ENCODE measurements at regions of chr2 and their contacts with region 1.

Region 1: GRCh38 chr2:72150157-72150865 is 2.6 kb upstream of the CYP26B1 start:
- DNase-seq: peak in 1 of 2 donors; percentile 86
- H3K4me3 ChIP-seq: peak overlapping the region; percentile 52 to 72
- H3K27ac ChIP-seq: no peak overlapping the region
- H3K4me1 ChIP-seq: peaks cover 11 to 31% of the 10 kb centered on the region in 2 donors
- H3K27me3 ChIP-seq: no peaks in the 10 kb centered on the region
- CTCF ChIP-seq: peak; percentile 88 to 90 (median 88)

Region 2: GRCh38 chr2:70301344-70302194 is 1848.7 kb before region 1 on chr2 and contains the start of gene FAM136A:
- intact Hi-C with region 1: loop called (anchors 5 kb)
- DNase-seq: peak; percentile 16 to 90
- H3K4me3 ChIP-seq: peak within 1 kb of the TSS; percentile 66 to 84
- H3K27ac ChIP-seq: peak within 1 kb of the TSS; percentile 80
- H3K4me1 ChIP-seq: peaks cover 0 to 5% of the 10 kb centered on the region in 2 donors
- H3K27me3 ChIP-seq: no peaks in the 10 kb centered on the region
- CTCF ChIP-seq: peak; percentile 94 to 99 (median 97)
- total RNA-seq, gene FAM136A: 2.0 TPM

Region 3: DNA sequence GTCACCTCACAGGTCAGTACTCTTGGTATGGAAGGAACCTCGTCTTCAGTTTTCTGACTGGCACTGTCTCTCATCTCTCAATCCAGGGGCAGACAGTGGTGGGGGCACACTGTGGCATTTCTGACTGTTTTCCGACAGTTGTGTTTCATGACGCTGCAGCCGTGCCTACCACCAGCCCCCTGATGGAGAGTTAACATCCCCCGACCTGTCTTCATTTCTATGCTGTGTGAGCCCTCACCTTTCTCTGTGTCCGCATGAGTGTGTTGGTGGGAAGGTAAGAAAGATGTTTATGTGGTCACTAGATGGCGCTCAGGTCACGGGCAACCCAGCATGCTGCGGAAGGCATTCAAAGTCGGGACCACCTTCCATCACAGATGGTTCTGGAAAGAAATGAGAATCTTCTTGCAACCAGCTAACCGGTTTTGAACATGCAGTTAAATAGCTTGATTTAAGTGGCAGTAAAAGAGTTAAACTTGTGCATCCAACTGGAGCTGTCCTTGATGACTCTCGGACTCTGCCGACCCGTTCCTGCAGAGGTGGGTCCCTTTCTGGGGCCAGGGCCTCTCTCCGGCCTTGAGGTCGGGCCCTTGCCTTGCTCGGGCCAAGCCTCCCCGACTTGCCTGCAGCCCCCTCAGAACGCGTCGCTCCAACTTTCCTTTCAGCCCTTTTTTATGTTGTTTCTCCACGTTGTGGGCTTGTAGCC is 604.6 kb before region 1 on chr2:
- intact Hi-C with region 1: loop called (anchors 1 kb)
- DNase-seq: peak in 1 of 2 donors; percentile 76
- H3K4me3 ChIP-seq: no peak overlapping the region
- H3K27ac ChIP-seq: no peak overlapping the region
- H3K4me1 ChIP-seq: no peaks in the 10 kb centered on the region
- H3K27me3 ChIP-seq: no peaks in the 10 kb centered on the region
- CTCF ChIP-seq: peak; percentile 74 to 84 (median 75)

Region 4: DNA sequence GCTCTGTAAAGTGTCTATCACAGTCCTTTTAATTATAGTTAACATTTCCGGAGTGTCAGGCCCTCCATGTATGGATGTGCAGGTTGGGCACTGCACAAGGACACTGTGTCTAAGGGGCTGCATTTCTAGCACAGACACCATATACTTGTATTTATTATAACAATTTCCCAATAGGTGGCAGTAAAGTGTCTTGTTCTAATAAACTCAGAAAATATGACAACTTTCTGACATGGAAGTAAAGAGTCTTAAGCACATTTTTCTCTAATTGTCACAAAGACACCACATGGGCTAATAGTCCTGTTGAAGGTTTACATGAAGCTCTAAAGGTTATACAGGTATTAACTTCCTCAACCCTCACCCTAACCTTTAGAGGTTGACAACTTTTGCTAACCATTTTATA is 540.4 kb before region 1 on chr2:
- intact Hi-C with region 1: loop called (anchors 1 kb)
- DNase-seq: no peak
- H3K4me3 ChIP-seq: no peak overlapping the region
- H3K27ac ChIP-seq: no peak overlapping the region
- H3K4me1 ChIP-seq: peaks cover 0 to 12% of the 10 kb centered on the region in 2 donors
- H3K27me3 ChIP-seq: no peaks in the 10 kb centered on the region
- CTCF ChIP-seq: peak in 2 of 3 experiments; percentile 32 to 53

Region 5: GRCh38 chr2:71798266-71799012 is 351.9 kb before region 1 on chr2:
- intact Hi-C with region 1: loop called (anchors 1 kb)
- DNase-seq: peak in 1 of 2 donors; percentile 63
- H3K4me3 ChIP-seq: no peak overlapping the region
- H3K27ac ChIP-seq: no peak overlapping the region
- H3K4me1 ChIP-seq: peaks cover 7 to 13% of the 10 kb centered on the region in 2 donors
- H3K27me3 ChIP-seq: no peaks in the 10 kb centered on the region
- CTCF ChIP-seq: peak; percentile 69 to 78 (median 72)

Region 6: GRCh38 chr2:71923887-71924533 is 226.3 kb before region 1 on chr2:
- intact Hi-C with region 1: loop called (anchors 1 kb)
- DNase-seq: no peak
- H3K4me3 ChIP-seq: no peak overlapping the region
- H3K27ac ChIP-seq: no peak overlapping the region
- H3K4me1 ChIP-seq: no peaks in the 10 kb centered on the region
- H3K27me3 ChIP-seq: no peaks in the 10 kb centered on the region
- CTCF ChIP-seq: peak; percentile 58 to 85 (median 78)

Region 7: DNA sequence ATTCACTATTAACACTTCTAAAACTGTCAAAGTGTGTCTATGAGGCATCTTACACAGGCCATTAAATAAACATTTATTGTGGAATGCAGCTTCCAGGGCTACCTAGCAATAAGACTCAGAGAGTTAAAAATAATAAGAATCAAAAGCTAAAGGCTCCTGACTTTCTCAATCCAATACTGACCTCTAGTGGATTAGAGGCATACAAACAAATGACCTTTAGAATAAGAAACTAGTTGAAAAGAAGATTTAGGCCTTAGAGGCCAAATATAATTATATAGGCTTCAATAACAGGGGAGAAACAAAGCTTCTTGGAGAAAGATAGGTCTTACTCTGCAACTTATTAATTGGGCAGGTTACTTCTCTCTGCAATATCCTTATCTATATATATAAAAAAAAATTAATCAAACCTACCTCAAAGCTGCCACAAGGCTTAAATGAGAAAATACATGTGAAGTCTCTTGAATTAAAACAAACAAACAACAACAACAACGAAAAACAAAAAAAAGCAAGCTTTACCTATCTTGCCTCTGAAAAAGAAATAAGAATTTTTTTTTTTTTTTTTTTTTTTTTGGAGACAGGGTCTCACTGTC is 429.4 kb after region 1 on chr2:
- intact Hi-C with region 1: loop called (anchors 10 kb)
- DNase-seq: no peak
- H3K4me3 ChIP-seq: no peak overlapping the region
- H3K27ac ChIP-seq: no peak overlapping the region
- H3K4me1 ChIP-seq: no peaks in the 10 kb centered on the region
- H3K27me3 ChIP-seq: no peaks in the 10 kb centered on the region
- CTCF ChIP-seq: peak; percentile 43 to 69 (median 54)

Region 8: GRCh38 chr2:72940786-72941185 is 790.5 kb after region 1 on chr2:
- intact Hi-C with region 1: no loop called
- DNase-seq: no peak
- H3K4me3 ChIP-seq: no peak overlapping the region
- H3K27ac ChIP-seq: no peak overlapping the region
- H3K4me1 ChIP-seq: no peaks in the 10 kb centered on the region
- H3K27me3 ChIP-seq: no peaks in the 10 kb centered on the region
- CTCF ChIP-seq: no peak

Measured in ascending aorta (tissue), 2 donors.